Sciatic nerve (tissue), 2 donors: ENCODE measurements at regions of chr3 and their contacts with region 1.

Region 1: GRCh38 chr3:197949754-197950660 is at the start of gene RPL35A:
- DNase-seq: peak; percentile 89
- ATAC-seq: peak; percentile 96
- total RNA-seq, gene RPL35A: 724 TPM

Region 2: DNA sequence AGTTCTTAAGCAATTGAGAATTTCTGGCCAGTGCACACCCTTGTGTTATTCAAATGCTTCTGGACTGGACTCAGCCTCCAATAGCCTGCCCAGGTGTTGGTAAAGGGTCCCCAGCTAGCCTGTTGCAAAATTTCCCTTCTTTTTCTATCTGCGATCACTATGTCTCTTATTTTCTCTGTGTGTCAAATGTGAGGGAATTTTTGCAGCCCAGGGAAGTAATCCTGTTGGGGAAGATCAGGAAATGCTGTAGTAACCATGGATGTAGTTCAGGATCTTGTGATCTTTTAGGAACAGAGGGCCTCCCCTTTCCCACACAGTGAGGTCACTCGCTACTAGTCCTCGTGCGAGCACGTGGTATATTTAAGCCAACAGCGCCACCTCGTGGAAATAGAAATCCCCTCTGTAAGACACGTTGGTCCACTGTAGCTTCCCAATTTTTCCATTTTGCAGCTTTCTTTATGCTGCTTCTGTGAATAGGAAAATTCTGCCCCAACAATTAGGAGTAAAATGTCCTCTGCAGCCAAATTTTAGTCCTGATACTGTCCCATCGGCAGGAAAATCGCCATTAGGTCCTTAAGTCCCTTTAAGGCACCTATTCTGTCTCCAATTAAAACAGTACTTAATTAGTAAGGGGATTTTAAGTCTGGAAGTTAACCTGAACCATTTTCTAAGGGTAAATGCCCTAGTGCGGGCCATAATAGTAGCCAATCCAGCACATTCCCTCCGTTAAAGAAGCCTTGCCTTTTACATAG is 1430.9 kb before region 1 on chr3:
- intact Hi-C with region 1: loop called (anchors 5 kb)
- DNase-seq: peak; percentile 72
- ATAC-seq: peak; percentile 62

Region 3: GRCh38 chr3:197749601-197750395 is 200.2 kb before region 1 on chr3 and contains the start of gene FYTTD1:
- intact Hi-C with region 1: loop called (anchors 5 kb)
- DNase-seq: peak; percentile 94
- ATAC-seq: peak; percentile 95
- total RNA-seq, gene FYTTD1: 66.8 TPM